ENCODE measurements at regions of chr1 and their contacts with region 1.

Region 1: GRCh38 chr1:3283849-3284248 is 170.6 kb upstream of the ARHGEF16 start:
- DNase-seq: peak in 1 of 2 experiments; percentile 88
- H3K4me3 ChIP-seq: peak overlapping the region in 1 of 4 experiments; percentile 25; a peak in 1 of 8 replicates
- H3K27ac ChIP-seq: no peak overlapping the region
- H3K4me1 ChIP-seq: peaks cover 0 to 15% (median 5%) of the 10 kb centered on the region in 4 experiments; a peak in 5 of 7 replicates
- H3K27me3 ChIP-seq: peaks cover 0 to 6% (median 1%) of the 10 kb centered on the region in 4 experiments; a peak in 1 of 7 replicates
- CTCF ChIP-seq: peak; percentile 75 to 88 (median 75)
- EP300 ChIP-seq: no peak
- POLR2A ChIP-seq: no peak
- RAD21 ChIP-seq: peak; percentile 81 to 86

Region 2: GRCh38 chr1:3068564-3069361 is 215.1 kb before region 1 on chr1 and contains the start of gene PRDM16:
- CTCF ChIA-PET with region 1: interaction called, 32 read pairs
- POLR2A ChIA-PET with region 1: no interaction called
- DNase-seq: peak in 1 of 2 experiments; percentile 64
- H3K4me3 ChIP-seq: peak within 1 kb of the TSS; percentile 19 to 66 (median 35)
- H3K27ac ChIP-seq: no peak within 1 kb of the TSS
- H3K4me1 ChIP-seq: peaks cover 0 to 44% (median 27%) of the 10 kb centered on the region in 4 experiments; a peak in 6 of 7 replicates
- H3K27me3 ChIP-seq: peaks cover 90 to 96% (median 92%) of the 10 kb centered on the region in 4 experiments
- CTCF ChIP-seq: no peak
- EP300 ChIP-seq: no peak
- POLR2A ChIP-seq: no peak
- RAD21 ChIP-seq: no peak
- total RNA-seq, gene PRDM16: 0.43 and 0.46 TPM in 2 replicates

Region 3: GRCh38 chr1:3261007-3261968 is 22.6 kb before region 1 on chr1:
- CTCF ChIA-PET with region 1: no interaction called
- POLR2A ChIA-PET with region 1: no interaction called
- DNase-seq: no peak
- H3K4me3 ChIP-seq: no peak overlapping the region
- H3K27ac ChIP-seq: no peak overlapping the region
- H3K4me1 ChIP-seq: peaks cover 0 to 6% (median 0%) of the 10 kb centered on the region in 4 experiments; a peak in 2 of 7 replicates
- H3K27me3 ChIP-seq: no peaks in the 10 kb centered on the region; a peak in 1 of 7 replicates
- CTCF ChIP-seq: no peak
- EP300 ChIP-seq: no peak
- POLR2A ChIP-seq: no peak
- RAD21 ChIP-seq: no peak

Measured in H1 (cell line).